AG04449 (cell line): ENCODE measurements at regions of chr3 and their contacts with region 1.

Region 1: DNA sequence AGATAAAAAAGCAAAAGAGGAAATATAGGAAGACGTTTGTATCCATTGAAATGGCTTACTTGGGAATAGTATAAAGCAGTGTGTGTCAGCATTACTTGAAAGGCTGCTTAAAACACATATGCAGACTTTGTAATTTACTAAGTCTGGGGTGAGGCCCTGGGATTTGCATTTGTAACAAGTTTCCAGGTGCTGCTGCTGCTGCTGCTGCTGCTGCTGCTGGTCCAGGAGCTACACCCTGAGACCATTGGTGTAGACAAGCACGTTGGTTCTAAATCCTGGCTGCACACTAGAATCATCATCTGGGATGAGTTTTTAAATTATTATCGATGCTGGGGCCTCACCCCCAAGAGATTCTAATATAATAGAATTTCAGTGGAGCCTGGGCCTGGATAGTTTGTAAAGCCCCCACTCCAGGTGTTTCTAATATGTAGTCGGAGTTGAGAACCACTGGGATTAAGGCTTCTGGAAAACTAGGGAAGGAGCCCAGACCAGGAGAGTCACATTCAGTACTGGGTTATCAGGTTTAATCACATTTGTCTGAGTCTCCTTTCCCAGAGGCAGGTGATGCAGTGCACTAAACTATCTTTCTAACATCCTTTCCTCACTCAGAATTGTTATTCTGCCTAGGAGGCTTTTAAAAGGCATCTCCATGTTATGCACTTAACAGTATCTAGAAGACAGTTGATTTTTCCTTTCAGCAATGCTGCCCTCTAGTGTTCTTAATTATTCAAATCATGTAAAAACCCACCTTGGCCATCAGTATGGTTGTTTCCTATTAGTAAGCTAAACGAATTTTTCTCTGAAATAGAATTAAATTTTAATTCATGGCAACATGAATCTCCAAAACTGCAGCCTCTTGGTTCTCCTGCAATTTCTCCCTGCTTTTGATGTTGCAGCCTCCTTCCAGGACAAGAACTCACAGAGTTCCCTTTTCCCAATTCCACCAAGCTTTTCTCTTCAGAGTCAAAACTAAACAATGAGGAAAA is 45.4 kb downstream of the SSR3 start:
- DNase-seq: no peak
- H3K4me3 ChIP-seq: no peak overlapping the region
- CTCF ChIP-seq: peak; percentile 29

Region 2: DNA sequence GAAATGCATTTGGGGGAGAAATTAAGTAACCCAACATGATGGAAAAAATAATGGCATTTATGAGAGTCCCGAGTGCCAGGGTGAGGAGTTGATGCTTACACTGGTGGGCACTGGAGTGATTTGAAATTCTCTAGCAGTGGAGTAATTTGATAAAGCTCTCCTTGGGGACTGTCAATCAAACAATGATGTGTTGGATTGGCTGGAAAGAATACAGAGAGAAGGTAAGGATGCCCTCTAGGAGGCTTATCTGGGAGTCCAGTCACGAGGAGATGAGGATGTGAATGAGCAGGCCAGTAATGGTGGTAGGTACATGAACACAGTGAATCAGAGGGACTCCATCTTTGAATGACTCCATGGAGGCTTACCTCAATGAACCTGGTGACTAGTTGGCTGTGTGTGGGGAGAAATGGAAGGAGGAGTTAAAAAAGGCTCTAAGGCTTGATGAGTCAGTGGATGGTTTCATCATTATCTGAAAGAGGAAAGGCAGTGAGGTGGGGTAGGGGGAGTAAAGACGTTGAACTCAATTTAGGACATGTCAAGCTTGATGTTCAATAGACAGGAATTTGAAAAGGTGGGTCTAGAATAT is 328.1 kb before region 1 on chr3:
- CTCF ChIA-PET with region 1: interaction called, 277 read pairs
- POLR2A ChIA-PET with region 1: no interaction called
- DNase-seq: no peak
- H3K4me3 ChIP-seq: no peak overlapping the region
- CTCF ChIP-seq: no peak

Region 3: DNA sequence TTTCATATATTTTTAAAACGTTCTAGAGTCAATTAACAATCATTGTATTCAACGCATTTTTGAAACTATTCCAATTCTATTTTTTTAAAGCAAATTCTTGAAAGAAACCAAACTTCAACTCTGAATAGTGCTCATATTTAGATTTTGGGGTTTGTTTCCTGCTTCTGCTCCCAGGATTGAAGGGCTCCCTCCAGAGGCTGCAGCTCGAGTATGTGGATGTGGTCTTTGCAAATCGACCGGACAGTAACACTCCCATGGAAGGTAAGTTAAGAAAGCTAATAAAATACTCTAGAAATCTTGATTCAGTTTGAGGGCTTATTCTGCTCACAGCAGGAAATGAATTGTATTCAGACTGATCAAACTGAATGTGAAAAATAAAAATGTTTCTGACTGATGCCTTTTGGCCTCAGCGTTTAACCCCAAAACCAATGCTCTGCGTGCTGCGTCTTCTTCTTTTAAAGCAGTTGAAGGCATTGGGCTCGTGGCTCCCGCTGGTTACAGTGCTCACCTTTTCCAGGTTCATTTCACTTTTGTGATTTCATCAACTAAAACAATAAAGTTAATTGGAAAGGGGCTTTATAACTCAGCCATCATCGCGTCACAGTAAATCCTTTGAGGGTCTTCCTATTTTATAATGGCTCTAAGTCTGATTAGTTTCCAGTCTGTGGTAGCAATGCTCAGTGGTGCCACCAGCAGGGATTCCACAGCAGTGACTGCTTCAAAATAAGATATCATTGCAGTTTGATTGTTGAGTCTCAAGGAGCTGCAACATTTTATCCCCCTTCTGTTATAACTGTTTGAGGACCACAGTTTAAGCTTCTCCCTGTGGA is 34.7 kb before region 1 on chr3:
- CTCF ChIA-PET with region 1: interaction called, 59 read pairs
- POLR2A ChIA-PET with region 1: no interaction called
- DNase-seq: no peak
- H3K4me3 ChIP-seq: no peak overlapping the region
- CTCF ChIP-seq: peak; percentile 14

Region 4: DNA sequence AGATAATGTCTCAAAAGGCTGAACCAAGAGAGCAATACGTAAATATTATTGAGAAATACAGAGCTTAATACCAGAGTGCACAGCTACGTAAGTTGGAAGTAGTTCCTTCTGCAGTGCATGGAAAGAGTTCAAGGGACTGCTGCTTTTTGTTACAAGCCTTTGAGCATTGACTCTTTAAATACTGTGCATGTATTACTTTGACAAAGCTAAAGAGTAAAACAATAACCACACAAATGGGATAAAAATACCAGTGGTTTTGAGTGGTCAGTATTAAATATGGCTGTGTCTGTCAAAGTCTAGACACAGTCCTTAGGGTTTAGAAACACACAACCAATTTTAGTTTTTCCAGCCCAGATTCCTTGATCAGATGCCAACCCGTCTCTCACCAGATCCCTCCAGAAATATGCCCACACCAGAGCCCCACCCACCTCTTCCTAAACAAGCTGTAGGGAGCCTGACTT is 16.7 kb before region 1 on chr3:
- CTCF ChIA-PET with region 1: interaction called, 13 read pairs
- POLR2A ChIA-PET with region 1: interaction called, 3 read pairs
- DNase-seq: no peak
- H3K4me3 ChIP-seq: no peak overlapping the region
- CTCF ChIP-seq: no peak

Region 5: GRCh38 chr3:156547637-156548036 is 38.2 kb after region 1 on chr3:
- CTCF ChIA-PET with region 1: interaction called, 15 read pairs
- POLR2A ChIA-PET with region 1: no interaction called
- DNase-seq: no peak
- H3K4me3 ChIP-seq: no peak overlapping the region
- CTCF ChIP-seq: no peak

Region 6: GRCh38 chr3:156743859-156744258 is 234.4 kb after region 1 on chr3:
- CTCF ChIA-PET with region 1: no interaction called
- POLR2A ChIA-PET with region 1: no interaction called
- DNase-seq: no peak
- H3K4me3 ChIP-seq: no peak overlapping the region
- CTCF ChIP-seq: no peak

Region 7: DNA sequence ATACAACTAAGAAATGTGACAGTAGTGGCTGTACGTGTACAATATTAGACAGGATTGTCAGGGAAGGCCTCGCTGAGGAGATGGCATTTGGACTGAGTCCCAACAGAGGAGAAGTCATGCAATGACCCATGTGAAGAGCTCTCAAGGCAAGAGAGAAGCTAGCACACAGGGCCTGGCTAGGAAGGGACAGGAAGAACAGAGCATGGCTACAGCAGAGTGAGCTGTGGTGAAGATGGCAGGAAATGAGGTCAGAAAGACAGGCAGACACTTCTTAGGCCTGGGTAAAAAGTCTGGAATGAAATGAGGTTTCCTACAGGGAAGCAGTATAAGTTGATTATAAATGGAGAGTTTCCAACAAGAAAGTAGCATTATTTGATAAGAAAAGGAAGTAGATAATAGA is 283.5 kb after region 1 on chr3:
- CTCF ChIA-PET with region 1: no interaction called
- POLR2A ChIA-PET with region 1: no interaction called
- DNase-seq: no peak
- H3K4me3 ChIP-seq: no peak overlapping the region
- CTCF ChIP-seq: no peak